Activated CD8-positive, alpha-beta memory T cell treated with anti-CD3 and anti-CD28 coated beads, Interleukin-2, amount 10 ng/mL, durations not matched to agents 7 days and 5 days (primary cell): ENCODE measurements at regions of chr1 and their contacts with region 1.

Region 1: GRCh38 chr1:39901698-39902459 is at the start of gene MYCL:
- DNase-seq: peak; percentile 83
- ATAC-seq: peak; percentile 89
- H3K4me3 Mint-ChIP-seq: peak within 1 kb of the TSS; percentile 60
- H3K27ac Mint-ChIP-seq: no peak within 1 kb of the TSS
- H3K4me1 Mint-ChIP-seq: peaks cover 7% of the 10 kb centered on the region
- H3K27me3 Mint-ChIP-seq: peaks cover 71% of the 10 kb centered on the region
- total RNA-seq, gene MYCL: 0.12 to 0.26 TPM

Region 2: DNA sequence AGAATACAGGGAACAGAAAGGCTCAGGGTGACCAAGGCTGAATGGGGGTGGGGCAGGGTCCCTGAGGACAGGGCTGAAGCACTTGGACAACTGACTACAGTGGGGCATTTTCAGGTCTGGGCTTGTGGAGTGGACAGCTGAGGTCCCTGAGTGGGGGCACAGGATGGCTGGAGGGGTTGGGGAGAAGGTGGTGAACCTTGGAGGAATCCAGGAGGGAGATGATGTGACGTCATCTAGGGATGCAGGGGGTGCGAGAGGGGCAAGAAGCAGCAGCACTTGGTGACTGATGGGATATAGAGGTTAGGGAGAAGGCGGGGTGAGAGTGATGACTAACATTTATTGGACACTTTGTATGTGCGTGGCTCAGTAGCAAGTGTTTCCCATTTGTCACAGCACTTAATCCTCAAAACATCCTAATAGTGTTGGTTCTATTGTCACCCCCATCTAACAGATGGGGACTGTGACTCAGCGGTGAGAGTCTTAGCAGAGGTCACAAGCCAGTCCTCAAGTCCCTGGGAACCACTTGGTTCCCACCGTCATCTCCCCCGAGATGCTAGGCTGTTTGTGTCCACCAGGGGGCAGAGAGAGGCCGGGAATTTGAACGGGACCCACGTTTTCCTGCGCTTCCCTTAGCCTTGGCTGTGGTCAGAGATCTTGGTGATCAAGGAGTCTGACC is 85.3 kb before region 1 on chr1:
- CTCF ChIA-PET with region 1: interaction called, 33 read pairs
- DNase-seq: peak; percentile 57
- ATAC-seq: peak; percentile 68
- H3K4me3 Mint-ChIP-seq: no peak overlapping the region
- H3K27ac Mint-ChIP-seq: peak overlapping the region; percentile 30
- H3K4me1 Mint-ChIP-seq: peaks cover 5% of the 10 kb centered on the region
- H3K27me3 Mint-ChIP-seq: peaks cover 18% of the 10 kb centered on the region

Region 3: GRCh38 chr1:39822091-39822490 is 79.8 kb before region 1 on chr1:
- CTCF ChIA-PET with region 1: interaction called, 33 read pairs
- DNase-seq: no peak
- ATAC-seq: no peak
- H3K4me3 Mint-ChIP-seq: no peak overlapping the region
- H3K27ac Mint-ChIP-seq: no peak overlapping the region
- H3K4me1 Mint-ChIP-seq: peaks cover 5% of the 10 kb centered on the region
- H3K27me3 Mint-ChIP-seq: peaks cover 7% of the 10 kb centered on the region

Region 4: GRCh38 chr1:39829791-39830533 is 71.9 kb before region 1 on chr1:
- CTCF ChIA-PET with region 1: interaction called, 12 read pairs
- DNase-seq: no peak
- ATAC-seq: no peak
- H3K4me3 Mint-ChIP-seq: no peak overlapping the region
- H3K27ac Mint-ChIP-seq: no peak overlapping the region
- H3K4me1 Mint-ChIP-seq: no peaks in the 10 kb centered on the region
- H3K27me3 Mint-ChIP-seq: peaks cover 22% of the 10 kb centered on the region

Region 5: GRCh38 chr1:39882152-39882551 is 19.7 kb before region 1 on chr1:
- CTCF ChIA-PET with region 1: interaction called, 20 read pairs
- DNase-seq: no peak
- ATAC-seq: no peak
- H3K4me3 Mint-ChIP-seq: peak overlapping the region; percentile 87
- H3K27ac Mint-ChIP-seq: peak overlapping the region; percentile 56
- H3K4me1 Mint-ChIP-seq: peaks cover 28% of the 10 kb centered on the region
- H3K27me3 Mint-ChIP-seq: no peaks in the 10 kb centered on the region

Region 6: GRCh38 chr1:39919545-39919944 is 17.7 kb after region 1 on chr1:
- CTCF ChIA-PET with region 1: interaction called, 25 read pairs
- DNase-seq: peak; percentile 55
- ATAC-seq: peak; percentile 90
- H3K4me3 Mint-ChIP-seq: no peak overlapping the region
- H3K27ac Mint-ChIP-seq: no peak overlapping the region
- H3K4me1 Mint-ChIP-seq: no peaks in the 10 kb centered on the region
- H3K27me3 Mint-ChIP-seq: peaks cover 9% of the 10 kb centered on the region

Region 7: GRCh38 chr1:39954816-39955546 is 53.1 kb after region 1 on chr1 and contains the start of gene MFSD2A:
- CTCF ChIA-PET with region 1: interaction called, 12 read pairs
- DNase-seq: peak; percentile 88
- ATAC-seq: peak; percentile 92
- H3K4me3 Mint-ChIP-seq: peak within 1 kb of the TSS; percentile 85
- H3K27ac Mint-ChIP-seq: peak within 1 kb of the TSS; percentile 63
- H3K4me1 Mint-ChIP-seq: peaks cover 12% of the 10 kb centered on the region
- H3K27me3 Mint-ChIP-seq: peaks cover 7% of the 10 kb centered on the region
- total RNA-seq, gene MFSD2A: 2.9 to 7.0 TPM

Region 8: DNA sequence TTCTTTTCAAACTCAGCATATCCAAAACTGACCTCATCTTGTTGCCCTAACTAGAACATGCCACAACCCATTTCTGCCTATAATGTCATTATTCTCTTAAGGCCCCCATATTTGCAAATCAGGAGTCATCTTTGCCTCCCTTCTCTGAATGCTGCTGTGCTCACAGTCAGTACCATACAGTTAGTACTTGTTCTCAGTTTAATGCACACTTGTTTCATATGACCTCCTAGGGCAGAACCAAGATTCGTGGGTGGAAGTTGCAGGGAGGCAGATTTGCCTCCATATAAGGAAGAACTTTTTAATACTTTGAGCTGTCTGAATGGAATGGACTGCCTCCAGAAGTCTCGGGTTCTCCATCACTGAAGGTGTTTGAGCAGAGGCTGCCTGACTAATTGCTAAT is 147.8 kb after region 1 on chr1:
- CTCF ChIA-PET with region 1: no interaction called
- DNase-seq: no peak
- ATAC-seq: peak; percentile 25
- H3K4me3 Mint-ChIP-seq: peak overlapping the region; percentile 5
- H3K27ac Mint-ChIP-seq: peak overlapping the region; percentile 77
- H3K4me1 Mint-ChIP-seq: peaks cover 80% of the 10 kb centered on the region
- H3K27me3 Mint-ChIP-seq: no peaks in the 10 kb centered on the region

Region 9: DNA sequence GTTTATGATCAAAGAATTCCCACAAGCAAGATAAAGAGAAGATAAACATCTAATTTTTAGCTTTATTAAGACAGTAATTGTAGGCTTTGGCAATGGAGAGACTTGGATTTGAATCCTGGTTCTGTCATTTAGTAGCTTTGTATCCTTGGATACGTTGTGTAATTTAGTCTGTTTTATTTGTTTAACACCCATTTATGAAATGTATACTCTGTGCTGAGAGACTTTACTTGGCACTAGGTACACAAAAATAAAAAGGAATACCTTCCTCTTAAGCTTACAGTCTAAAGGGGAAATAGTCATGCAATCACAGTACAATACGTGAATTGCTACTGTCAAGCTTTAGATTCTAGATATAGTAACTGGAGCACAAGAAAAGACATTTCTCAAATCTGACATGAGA is 380.0 kb after region 1 on chr1:
- CTCF ChIA-PET with region 1: no interaction called
- DNase-seq: no peak
- ATAC-seq: no peak
- H3K4me3 Mint-ChIP-seq: no peak overlapping the region
- H3K27ac Mint-ChIP-seq: no peak overlapping the region
- H3K4me1 Mint-ChIP-seq: no peaks in the 10 kb centered on the region
- H3K27me3 Mint-ChIP-seq: no peaks in the 10 kb centered on the region